ENCODE measurements at regions of chr6 and their contacts with region 1.

Region 1: GRCh38 chr6:116287689-116288282 is 8.1 kb upstream of the TSPYL1 start:
- DNase-seq: peak; percentile 42

Region 2: DNA sequence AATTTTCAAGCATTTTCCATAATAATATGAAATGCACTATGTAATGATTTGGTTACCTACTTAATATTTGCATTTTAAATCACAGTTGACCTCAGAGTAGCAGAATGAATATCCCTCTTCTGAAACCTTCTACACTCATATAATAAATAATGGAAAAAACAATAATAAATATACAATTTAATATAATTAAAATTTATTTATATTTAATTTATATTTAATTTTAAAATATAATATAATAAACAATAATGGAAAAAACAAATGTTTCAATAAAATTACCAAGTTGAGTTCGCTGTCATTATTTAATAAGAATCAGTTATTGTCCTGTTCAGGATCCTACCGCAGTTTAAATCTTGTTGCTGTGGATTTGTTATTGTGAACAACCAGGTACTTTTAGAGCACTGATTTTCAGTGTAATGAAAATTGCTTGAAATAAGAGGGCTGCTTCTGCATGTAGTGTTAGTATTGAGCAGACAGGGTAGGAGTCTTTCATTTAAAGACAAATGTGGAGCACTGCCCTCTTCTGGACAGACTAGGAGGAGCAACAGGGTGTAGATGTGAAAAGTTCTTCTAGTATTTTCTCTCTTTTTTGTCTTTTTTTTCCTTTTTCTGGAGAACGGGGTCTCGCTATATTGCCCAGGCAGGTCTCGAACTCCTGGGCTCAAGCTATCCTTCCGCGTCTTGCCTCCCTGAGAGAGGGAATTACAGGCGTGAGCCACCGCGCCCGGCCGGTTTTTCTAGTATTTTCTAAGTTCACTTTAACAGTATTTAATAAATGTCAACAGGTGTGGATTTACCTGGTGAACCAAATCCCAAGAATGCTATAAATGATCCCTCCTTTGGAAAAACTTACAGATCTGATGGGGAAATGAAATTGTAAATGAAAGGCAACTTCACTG is 244.1 kb after region 1 on chr6:
- CTCF ChIA-PET with region 1: interaction called, 12 read pairs
- POLR2A ChIA-PET with region 1: no interaction called
- DNase-seq: peak; percentile 64

Region 3: GRCh38 chr6:116561377-116562018 is 273.7 kb after region 1 on chr6:
- CTCF ChIA-PET with region 1: interaction called, 11 read pairs
- POLR2A ChIA-PET with region 1: interaction called, 3 read pairs
- DNase-seq: peak; percentile 73

Measured in HEK293T (cell line).